ENCODE measurements at regions of chr20 and their contacts with region 1.

Region 1: DNA sequence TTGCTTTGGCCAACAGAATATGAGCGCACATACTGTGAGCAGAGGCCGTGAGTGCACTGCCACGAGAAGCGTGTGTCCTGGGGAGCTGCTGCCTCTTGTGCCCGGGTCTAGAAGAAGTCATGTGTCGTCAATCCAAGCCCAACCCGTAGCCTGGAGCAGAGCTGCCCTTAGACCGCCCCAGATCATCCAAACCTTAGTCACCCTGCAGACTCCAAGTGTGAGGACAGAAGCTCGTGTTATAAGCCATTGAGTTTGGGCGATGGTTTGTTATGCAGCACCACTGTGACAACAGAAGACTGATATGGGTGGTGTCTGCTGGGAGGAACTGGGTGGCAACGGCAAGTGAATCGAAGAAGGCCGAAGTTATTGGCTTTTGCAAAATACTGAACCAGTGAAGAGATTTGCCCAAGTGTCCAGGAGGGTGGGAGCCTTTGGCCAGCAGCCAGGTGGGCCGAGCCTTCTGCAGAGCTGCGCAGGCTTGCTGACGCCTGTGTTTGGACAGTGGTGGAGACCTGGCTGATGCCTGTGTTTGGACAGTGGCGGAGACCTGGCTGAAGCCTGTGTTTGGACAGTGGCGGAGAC is 101.3 kb upstream of the SULF2 start:
- DNase-seq: no peak
- CTCF ChIP-seq: no peak

Region 2: GRCh38 chr20:48523212-48523941 is 636.8 kb after region 1 on chr20:
- in situ Hi-C with region 1: loop called (anchors 5 kb)
- DNase-seq: peak; percentile 70
- CTCF ChIP-seq: no peak